Vagina (tissue), 2 donors: ENCODE measurements at regions of chr2 and their contacts with region 1.

Region 1: GRCh38 chr2:109507217-109507616 is 106.5 kb downstream of the SEPTIN10 start:
- DNase-seq: no peak
- H3K4me3 ChIP-seq: no peak overlapping the region
- H3K27ac ChIP-seq: no peak overlapping the region
- H3K4me1 ChIP-seq: peaks cover 8% of the 10 kb centered on the region
- H3K27me3 ChIP-seq: no peaks in the 10 kb centered on the region
- CTCF ChIP-seq: no peak
- POLR2A ChIP-seq: no peak

Region 2: GRCh38 chr2:109128048-109128465 is 379.2 kb before region 1 on chr2:
- intact Hi-C with region 1: loop called (anchors 2 kb)
- DNase-seq: no peak
- H3K4me3 ChIP-seq: peak overlapping the region; percentile 55 to 77
- H3K27ac ChIP-seq: peak overlapping the region; percentile 66
- H3K4me1 ChIP-seq: peaks cover 37% of the 10 kb centered on the region
- H3K27me3 ChIP-seq: no peaks in the 10 kb centered on the region
- CTCF ChIP-seq: peak; percentile 76 to 97 (median 90)
- POLR2A ChIP-seq: peak in 1 of 2 donors; percentile 28

Region 3: DNA sequence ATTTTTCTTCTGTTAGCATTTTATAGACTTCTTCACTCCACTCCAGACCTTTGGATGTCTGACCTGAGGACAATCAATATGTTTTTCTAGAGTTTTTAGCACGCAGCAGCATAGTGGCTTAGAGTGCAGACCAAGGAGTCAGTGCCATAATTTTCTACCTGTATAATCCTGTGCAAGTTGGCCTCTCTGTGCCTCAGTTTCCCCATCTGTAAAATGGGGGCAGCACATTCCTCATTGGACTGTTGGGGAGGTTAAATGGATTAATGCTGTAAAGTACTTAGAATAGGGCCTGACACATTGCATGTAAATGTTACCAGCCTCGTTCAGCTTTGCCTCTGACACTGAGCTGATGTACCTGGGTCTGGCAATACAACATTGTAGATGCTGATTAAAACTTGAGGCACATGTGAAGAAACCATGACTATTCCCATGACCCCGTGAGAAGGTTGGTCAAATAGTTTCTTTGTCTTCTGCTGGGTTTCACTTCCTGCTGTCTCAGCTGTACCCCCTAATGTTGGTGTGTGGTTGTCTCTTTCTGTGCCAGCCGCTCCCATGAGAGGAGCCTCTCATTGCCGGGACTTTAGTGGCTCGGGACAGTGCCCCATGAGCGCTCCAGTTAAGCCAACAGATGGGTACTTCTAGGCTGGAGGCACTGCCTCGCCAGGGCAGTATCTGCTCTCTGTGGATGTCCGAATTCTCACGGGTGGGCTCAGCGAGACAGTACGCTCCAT is 252.9 kb before region 1 on chr2:
- intact Hi-C with region 1: loop called (anchors 10 kb)
- DNase-seq: no peak
- H3K4me3 ChIP-seq: no peak overlapping the region
- H3K27ac ChIP-seq: no peak overlapping the region
- H3K4me1 ChIP-seq: peaks cover 35% of the 10 kb centered on the region
- H3K27me3 ChIP-seq: no peaks in the 10 kb centered on the region
- CTCF ChIP-seq: no peak
- POLR2A ChIP-seq: no peak